ENCODE measurements at regions of chr12 and their contacts with region 1.

Region 1: GRCh38 chr12:107093417-107094182 is at the start of gene CRY1:
- DNase-seq: peak; percentile 91 to 94
- ATAC-seq: peak; percentile 93 to 94
- H3K4me3 ChIP-seq: peak within 1 kb of the TSS; percentile 92 to 99 (median 98)
- H3K27ac ChIP-seq: peak within 1 kb of the TSS; percentile 98 to 100 (median 99)
- H3K4me1 ChIP-seq: peaks cover 17 to 27% of the 10 kb centered on the region in 2 donors
- H3K27me3 ChIP-seq: no peaks in the 10 kb centered on the region
- CTCF ChIP-seq: no peak
- POLR2A ChIP-seq: peak; percentile 98 to 99
- total RNA-seq, gene CRY1: 11.1 to 22.7 (median 11.7) TPM

Region 2: GRCh38 chr12:105107494-105108371 is 1985.9 kb before region 1 on chr12 and contains the start of gene WASHC4:
- in situ Hi-C with region 1: no loop called
- intact Hi-C with region 1: loop called (anchors 10 kb)
- DNase-seq: peak; percentile 90
- ATAC-seq: peak; percentile 94 to 96
- H3K4me3 ChIP-seq: peak within 1 kb of the TSS; percentile 91 to 95 (median 93)
- H3K27ac ChIP-seq: peak within 1 kb of the TSS; percentile 92 to 98 (median 96)
- H3K4me1 ChIP-seq: peaks cover 30 to 32% of the 10 kb centered on the region in 2 donors
- H3K27me3 ChIP-seq: no peaks in the 10 kb centered on the region
- CTCF ChIP-seq: peak in 1 of 5 experiments; percentile 16
- POLR2A ChIP-seq: peak; percentile 96 to 97
- total RNA-seq, gene WASHC4: 23.6 to 53.2 (median 36.7) TPM

Region 3: GRCh38 chr12:106774005-106774807 is 319.4 kb before region 1 on chr12 and contains the start of gene RIC8B:
- in situ Hi-C with region 1: no loop called
- intact Hi-C with region 1: loop called (anchors 5 kb)
- DNase-seq: peak; percentile 95 to 96
- ATAC-seq: peak; percentile 99
- H3K4me3 ChIP-seq: peak within 1 kb of the TSS; percentile 79 to 97 (median 86)
- H3K27ac ChIP-seq: peak within 1 kb of the TSS; percentile 94 to 95 (median 94)
- H3K4me1 ChIP-seq: peaks cover 14 to 18% of the 10 kb centered on the region in 2 donors
- H3K27me3 ChIP-seq: no peaks in the 10 kb centered on the region
- CTCF ChIP-seq: no peak
- POLR2A ChIP-seq: peak; percentile 73 to 80
- total RNA-seq, gene RIC8B: 6.1 to 16.0 (median 10.0) TPM

Region 4: GRCh38 chr12:106955377-106956047 is 138.1 kb before region 1 on chr12 and contains the start of gene TMEM263:
- in situ Hi-C with region 1: no loop called
- intact Hi-C with region 1: loop called (anchors 1 kb)
- DNase-seq: peak; percentile 89 to 91
- ATAC-seq: peak; percentile 78 to 82
- H3K4me3 ChIP-seq: peak within 1 kb of the TSS; percentile 66 to 92 (median 80)
- H3K27ac ChIP-seq: peak within 1 kb of the TSS; percentile 87 to 97 (median 92)
- H3K4me1 ChIP-seq: peaks cover 20 to 27% of the 10 kb centered on the region in 2 donors
- H3K27me3 ChIP-seq: no peaks in the 10 kb centered on the region
- CTCF ChIP-seq: peak in 1 of 5 experiments; percentile 7
- POLR2A ChIP-seq: peak; percentile 88 to 94
- total RNA-seq, gene TMEM263: 8.9 to 26.7 (median 15.9) TPM

Region 5: DNA sequence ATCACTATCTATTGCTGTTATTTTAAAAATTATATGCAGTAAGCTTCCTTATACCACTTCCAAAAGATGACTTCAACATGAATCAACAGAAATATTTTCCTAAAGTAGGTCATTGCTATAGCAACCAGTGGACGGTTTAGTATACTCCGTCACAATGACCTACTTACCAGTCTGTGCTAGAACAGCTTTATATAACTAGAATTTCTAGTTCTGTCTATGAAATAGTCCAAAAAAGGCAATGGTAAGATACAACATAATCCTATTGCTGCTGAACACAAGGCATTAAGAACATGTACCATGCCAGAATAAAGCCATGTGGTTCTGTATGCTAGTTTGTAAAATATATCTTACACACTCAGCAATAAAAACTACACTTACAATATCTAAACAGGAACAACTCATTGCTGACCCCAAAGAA is 66.0 kb before region 1 on chr12:
- in situ Hi-C with region 1: no loop called
- intact Hi-C with region 1: loop called (anchors 1 kb)
- DNase-seq: peak; percentile 9 to 23
- ATAC-seq: peak; percentile 98 to 99
- H3K4me3 ChIP-seq: peak overlapping the region; percentile 11 to 39 (median 32)
- H3K27ac ChIP-seq: peak overlapping the region; percentile 76 to 89 (median 84)
- H3K4me1 ChIP-seq: peaks cover 47 to 62% of the 10 kb centered on the region in 2 donors
- H3K27me3 ChIP-seq: no peaks in the 10 kb centered on the region
- CTCF ChIP-seq: no peak
- POLR2A ChIP-seq: peak in 1 of 2 donors; percentile 28

Region 6: GRCh38 chr12:107225635-107226034 is 132.0 kb after region 1 on chr12:
- in situ Hi-C with region 1: no loop called
- intact Hi-C with region 1: no loop called
- DNase-seq: no peak
- ATAC-seq: no peak
- H3K4me3 ChIP-seq: no peak overlapping the region
- H3K27ac ChIP-seq: no peak overlapping the region
- H3K4me1 ChIP-seq: no peaks in the 10 kb centered on the region
- H3K27me3 ChIP-seq: peaks cover 0 to 6% (median 0%) of the 10 kb centered on the region in 3 donors
- CTCF ChIP-seq: no peak
- POLR2A ChIP-seq: no peak